CD4-positive, alpha-beta T cell (primary cell): ENCODE measurements at regions of chr1 and their contacts with region 1.

Region 1: DNA sequence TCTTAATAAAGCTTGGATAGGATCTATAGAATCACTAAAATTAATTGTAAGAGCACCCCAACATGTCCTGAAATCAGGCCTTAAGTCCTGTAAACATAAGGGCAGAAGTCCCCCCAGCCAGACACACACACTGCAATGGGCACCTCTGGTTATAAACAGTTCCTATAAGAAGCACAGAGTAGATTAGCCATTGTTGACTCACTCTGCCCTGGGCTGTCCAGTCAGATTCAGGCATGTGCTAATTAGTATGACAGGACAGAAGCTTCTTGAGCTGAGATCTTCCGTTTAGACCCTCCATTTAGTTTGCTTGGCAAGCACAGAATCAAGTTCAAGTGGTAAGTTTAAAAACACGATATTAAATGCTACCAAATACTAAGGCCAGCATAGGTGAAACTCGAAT is 11.8 kb upstream of the DENND1B start:
- DNase-seq: no peak
- ATAC-seq: no peak
- H3K4me3 ChIP-seq: no peak overlapping the region
- H3K4me3 Mint-ChIP-seq: no peak overlapping the region
- H3K27ac ChIP-seq: no peak overlapping the region
- H3K27ac Mint-ChIP-seq: no peak overlapping the region
- H3K4me1 ChIP-seq: no peaks in the 10 kb centered on the region
- H3K4me1 Mint-ChIP-seq: no peaks in the 10 kb centered on the region
- H3K27me3 ChIP-seq: no peaks in the 10 kb centered on the region
- H3K27me3 Mint-ChIP-seq: no peaks in the 10 kb centered on the region
- CTCF ChIP-seq: no peak

Region 2: GRCh38 chr1:197744979-197745378 is 42.1 kb before region 1 on chr1:
- CTCF ChIA-PET with region 1: no interaction called
- POLR2A ChIA-PET with region 1: no interaction called
- intact Hi-C with region 1: loop called in 1 of 2 experiments (anchors 5 kb)
- DNase-seq: no peak
- ATAC-seq: no peak
- H3K4me3 ChIP-seq: no peak overlapping the region
- H3K4me3 Mint-ChIP-seq: no peak overlapping the region
- H3K27ac ChIP-seq: no peak overlapping the region
- H3K27ac Mint-ChIP-seq: no peak overlapping the region
- H3K4me1 ChIP-seq: peaks cover 4% of the 10 kb centered on the region
- H3K4me1 Mint-ChIP-seq: peaks cover 89% of the 10 kb centered on the region
- H3K27me3 ChIP-seq: no peaks in the 10 kb centered on the region
- H3K27me3 Mint-ChIP-seq: no peaks in the 10 kb centered on the region
- CTCF ChIP-seq: no peak

Region 3: GRCh38 chr1:197761621-197762020 is 25.4 kb before region 1 on chr1:
- CTCF ChIA-PET with region 1: no interaction called
- POLR2A ChIA-PET with region 1: no interaction called
- intact Hi-C with region 1: loop called in 1 of 2 experiments (anchors 2 kb)
- DNase-seq: no peak
- ATAC-seq: peak; percentile 21
- H3K4me3 ChIP-seq: no peak overlapping the region
- H3K4me3 Mint-ChIP-seq: no peak overlapping the region
- H3K27ac ChIP-seq: no peak overlapping the region
- H3K27ac Mint-ChIP-seq: no peak overlapping the region
- H3K4me1 ChIP-seq: peaks cover 3% of the 10 kb centered on the region
- H3K4me1 Mint-ChIP-seq: peaks cover 70% of the 10 kb centered on the region
- H3K27me3 ChIP-seq: no peaks in the 10 kb centered on the region
- H3K27me3 Mint-ChIP-seq: no peaks in the 10 kb centered on the region
- CTCF ChIP-seq: no peak

Region 4: DNA sequence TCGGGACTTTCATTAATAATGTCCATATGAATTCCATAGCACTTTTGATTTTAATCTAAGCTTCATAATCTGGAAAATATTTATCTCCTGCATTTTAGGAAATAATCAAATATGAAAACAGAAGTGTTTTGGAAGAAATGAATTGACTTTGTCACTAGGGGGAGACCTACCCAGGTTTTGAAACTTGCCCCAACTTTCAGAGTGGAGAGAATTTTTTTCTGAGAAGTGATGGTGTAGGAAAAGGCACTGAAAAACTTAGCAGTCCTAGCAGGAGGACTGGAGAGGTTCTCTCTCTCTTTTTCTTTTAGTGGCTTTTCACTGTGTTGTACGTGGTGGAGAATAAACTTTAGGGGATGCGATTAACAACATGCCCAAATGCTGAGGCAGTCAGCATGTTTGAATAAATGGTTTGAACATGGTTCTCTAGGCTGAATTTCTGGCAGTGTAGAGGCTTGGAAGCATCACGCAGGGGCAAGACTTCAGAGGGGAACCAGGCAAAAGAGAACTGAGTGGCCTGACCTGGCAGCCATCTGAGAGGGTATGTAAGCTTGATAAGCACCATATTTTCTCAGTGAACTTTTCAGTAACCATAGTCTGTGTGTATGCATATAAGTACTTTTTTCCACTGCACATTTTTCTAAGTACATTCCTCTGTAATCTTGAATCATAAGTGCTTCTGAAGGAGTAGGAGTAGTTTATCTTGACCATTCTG is 301.5 kb after region 1 on chr1:
- CTCF ChIA-PET with region 1: no interaction called
- POLR2A ChIA-PET with region 1: no interaction called
- intact Hi-C with region 1: no loop called
- DNase-seq: peak in 3 of 14 experiments; percentile 52 to 59 (median 56)
- ATAC-seq: no peak
- H3K4me3 ChIP-seq: no peak overlapping the region
- H3K4me3 Mint-ChIP-seq: no peak overlapping the region
- H3K27ac ChIP-seq: no peak overlapping the region
- H3K27ac Mint-ChIP-seq: no peak overlapping the region
- H3K4me1 ChIP-seq: no peaks in the 10 kb centered on the region
- H3K4me1 Mint-ChIP-seq: no peaks in the 10 kb centered on the region
- H3K27me3 ChIP-seq: no peaks in the 10 kb centered on the region
- H3K27me3 Mint-ChIP-seq: no peaks in the 10 kb centered on the region
- CTCF ChIP-seq: peak; percentile 80